ENCODE measurements at regions of chr6 and their contacts with region 1.

Region 1: GRCh38 chr6:74671558-74672025 is 534.3 kb downstream of the COL12A1 start:
- DNase-seq: peak in 1 of 2 donors; percentile 69
- H3K4me3 ChIP-seq: no peak overlapping the region
- H3K27ac ChIP-seq: peak overlapping the region; percentile 32 to 56
- H3K4me1 ChIP-seq: peaks cover 0 to 4% of the 10 kb centered on the region in 2 donors
- H3K27me3 ChIP-seq: no peaks in the 10 kb centered on the region
- CTCF ChIP-seq: no peak

Region 2: GRCh38 chr6:74598473-74599393 is 72.9 kb before region 1 on chr6:
- intact Hi-C with region 1: no loop called
- DNase-seq: no peak
- H3K4me3 ChIP-seq: no peak overlapping the region
- H3K27ac ChIP-seq: no peak overlapping the region
- H3K4me1 ChIP-seq: no peaks in the 10 kb centered on the region
- H3K27me3 ChIP-seq: no peaks in the 10 kb centered on the region
- CTCF ChIP-seq: no peak

Region 3: GRCh38 chr6:74690365-74690764 is 18.8 kb after region 1 on chr6:
- intact Hi-C with region 1: no loop called
- DNase-seq: no peak
- H3K4me3 ChIP-seq: no peak overlapping the region
- H3K27ac ChIP-seq: no peak overlapping the region
- H3K4me1 ChIP-seq: no peaks in the 10 kb centered on the region
- H3K27me3 ChIP-seq: no peaks in the 10 kb centered on the region
- CTCF ChIP-seq: no peak

Region 4: DNA sequence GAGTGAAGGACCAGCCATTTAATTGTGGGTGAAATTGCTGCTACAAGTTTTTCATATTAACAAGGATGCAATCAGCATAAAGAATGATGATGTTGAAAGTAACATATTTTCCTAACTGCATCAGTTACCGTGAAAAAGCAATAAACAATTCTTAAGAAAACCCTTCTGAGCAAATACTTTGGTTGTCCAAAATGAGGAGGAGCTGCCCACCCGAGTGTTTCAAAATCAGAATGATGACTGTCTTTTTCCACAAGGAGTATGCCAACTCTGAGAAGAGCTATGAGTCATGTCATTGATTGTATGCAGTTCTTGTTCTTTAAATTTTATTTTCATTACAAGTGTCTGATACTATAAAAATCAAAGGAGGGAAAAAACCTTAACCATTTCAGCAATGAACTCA is 63.7 kb after region 1 on chr6:
- intact Hi-C with region 1: loop called (anchors 5 kb)
- DNase-seq: peak in 1 of 2 donors; percentile 70
- H3K4me3 ChIP-seq: no peak overlapping the region
- H3K27ac ChIP-seq: peak overlapping the region in 1 of 2 donors; percentile 59
- H3K4me1 ChIP-seq: no peaks in the 10 kb centered on the region
- H3K27me3 ChIP-seq: no peaks in the 10 kb centered on the region
- CTCF ChIP-seq: no peak

Measured in ascending aorta (tissue), 2 donors.